ENCODE measurements at regions of chr20 and their contacts with region 1.

Region 1: GRCh38 chr20:17617551-17618223 is 47.8 kb downstream of the DSTN start:
- DNase-seq: peak in 7 of 9 experiments; percentile 25 to 67 (median 58)
- ATAC-seq: peak; percentile 55
- H3K4me3 ChIP-seq: no peak overlapping the region
- H3K4me3 Mint-ChIP-seq: no peak overlapping the region
- H3K27ac ChIP-seq: no peak overlapping the region
- H3K27ac Mint-ChIP-seq: no peak overlapping the region
- H3K4me1 ChIP-seq: peaks cover 4% of the 10 kb centered on the region
- H3K4me1 Mint-ChIP-seq: peaks cover 7% of the 10 kb centered on the region
- H3K27me3 ChIP-seq: no peaks in the 10 kb centered on the region
- H3K27me3 Mint-ChIP-seq: no peaks in the 10 kb centered on the region
- CTCF ChIP-seq: peak; percentile 58

Region 2: GRCh38 chr20:17542993-17543412 is 74.7 kb before region 1 on chr20:
- CTCF ChIA-PET with region 1: interaction called, 17 read pairs
- POLR2A ChIA-PET with region 1: no interaction called
- intact Hi-C with region 1: no loop called
- DNase-seq: no peak
- ATAC-seq: no peak
- H3K4me3 ChIP-seq: no peak overlapping the region
- H3K4me3 Mint-ChIP-seq: no peak overlapping the region
- H3K27ac ChIP-seq: no peak overlapping the region
- H3K27ac Mint-ChIP-seq: no peak overlapping the region
- H3K4me1 ChIP-seq: no peaks in the 10 kb centered on the region
- H3K4me1 Mint-ChIP-seq: no peaks in the 10 kb centered on the region
- H3K27me3 ChIP-seq: no peaks in the 10 kb centered on the region
- H3K27me3 Mint-ChIP-seq: peaks cover 16% of the 10 kb centered on the region
- CTCF ChIP-seq: no peak

Region 3: GRCh38 chr20:17604852-17605660 is 12.6 kb before region 1 on chr20:
- CTCF ChIA-PET with region 1: interaction called, 18 read pairs
- POLR2A ChIA-PET with region 1: no interaction called
- intact Hi-C with region 1: no loop called
- DNase-seq: no peak
- ATAC-seq: no peak
- H3K4me3 ChIP-seq: no peak overlapping the region
- H3K4me3 Mint-ChIP-seq: no peak overlapping the region
- H3K27ac ChIP-seq: no peak overlapping the region
- H3K27ac Mint-ChIP-seq: no peak overlapping the region
- H3K4me1 ChIP-seq: peaks cover 11% of the 10 kb centered on the region
- H3K4me1 Mint-ChIP-seq: peaks cover 15% of the 10 kb centered on the region
- H3K27me3 ChIP-seq: no peaks in the 10 kb centered on the region
- H3K27me3 Mint-ChIP-seq: no peaks in the 10 kb centered on the region
- CTCF ChIP-seq: no peak

Region 4: GRCh38 chr20:17771206-17772004 is 153.7 kb after region 1 on chr20:
- CTCF ChIA-PET with region 1: no interaction called
- POLR2A ChIA-PET with region 1: no interaction called
- intact Hi-C with region 1: no loop called
- DNase-seq: no peak
- ATAC-seq: no peak
- H3K4me3 ChIP-seq: no peak overlapping the region
- H3K4me3 Mint-ChIP-seq: no peak overlapping the region
- H3K27ac ChIP-seq: no peak overlapping the region
- H3K27ac Mint-ChIP-seq: no peak overlapping the region
- H3K4me1 ChIP-seq: no peaks in the 10 kb centered on the region
- H3K4me1 Mint-ChIP-seq: no peaks in the 10 kb centered on the region
- H3K27me3 ChIP-seq: no peaks in the 10 kb centered on the region
- H3K27me3 Mint-ChIP-seq: peaks cover 8% of the 10 kb centered on the region
- CTCF ChIP-seq: no peak